RWPE1 (cell line): ENCODE measurements at regions of chr1 and their contacts with region 1.

Region 1: GRCh38 chr1:204363335-204364124 is 3.8 kb upstream of the PLEKHA6 start:
- DNase-seq: peak; percentile 81
- H3K27ac ChIP-seq: peak overlapping the region; percentile 48
- CTCF ChIP-seq: peak; percentile 93

Region 2: GRCh38 chr1:204190212-204191211 is 173.0 kb before region 1 on chr1:
- CTCF ChIA-PET with region 1: interaction called, 19 read pairs
- POLR2A ChIA-PET with region 1: no interaction called
- DNase-seq: peak; percentile 55
- H3K27ac ChIP-seq: no peak overlapping the region
- CTCF ChIP-seq: no peak

Region 3: GRCh38 chr1:204207136-204207616 is 156.4 kb before region 1 on chr1:
- CTCF ChIA-PET with region 1: interaction called, 52 read pairs
- POLR2A ChIA-PET with region 1: no interaction called
- DNase-seq: peak; percentile 91
- H3K27ac ChIP-seq: no peak overlapping the region
- CTCF ChIP-seq: peak; percentile 95

Region 4: DNA sequence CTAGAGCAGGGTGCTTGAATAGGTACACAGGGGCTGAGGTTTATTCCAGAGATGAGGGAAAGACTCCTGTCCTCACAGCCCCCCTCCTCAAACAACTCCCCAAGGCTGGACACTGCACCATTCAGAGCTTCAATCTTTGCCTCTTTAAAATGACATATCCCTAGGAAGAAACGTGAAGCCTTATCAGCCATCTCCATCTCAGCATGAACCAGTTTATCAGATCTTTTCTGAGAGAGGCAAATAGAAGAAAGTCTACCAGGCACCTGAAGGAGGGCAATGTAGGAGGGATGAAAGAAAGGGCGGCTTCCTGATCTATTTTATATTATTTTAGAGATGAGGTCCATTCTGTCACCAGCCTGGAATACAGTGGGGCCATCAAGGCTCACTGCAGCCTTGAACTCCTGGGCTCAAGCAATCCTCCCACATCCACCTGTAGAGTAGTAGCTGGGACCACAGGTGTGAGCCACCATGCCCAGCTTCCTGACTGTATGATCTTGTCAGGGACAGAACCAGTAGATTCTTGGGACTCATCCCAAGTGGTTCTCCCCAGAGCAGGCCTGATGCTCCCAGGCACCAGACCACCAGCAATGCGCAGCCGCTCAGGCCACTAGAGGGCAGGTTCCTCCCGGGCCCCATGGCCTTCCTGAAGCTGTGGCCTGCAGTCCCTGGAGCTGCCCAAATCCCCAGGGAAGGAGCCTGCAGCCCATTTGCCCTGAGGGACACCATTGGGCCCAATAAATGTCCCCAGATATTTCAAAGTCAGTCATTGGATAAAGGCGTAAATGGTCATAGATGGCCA is 105.4 kb before region 1 on chr1:
- CTCF ChIA-PET with region 1: interaction called, 45 read pairs
- POLR2A ChIA-PET with region 1: interaction called, 6 read pairs
- DNase-seq: peak; percentile 82
- H3K27ac ChIP-seq: no peak overlapping the region
- CTCF ChIP-seq: peak; percentile 51

Region 5: DNA sequence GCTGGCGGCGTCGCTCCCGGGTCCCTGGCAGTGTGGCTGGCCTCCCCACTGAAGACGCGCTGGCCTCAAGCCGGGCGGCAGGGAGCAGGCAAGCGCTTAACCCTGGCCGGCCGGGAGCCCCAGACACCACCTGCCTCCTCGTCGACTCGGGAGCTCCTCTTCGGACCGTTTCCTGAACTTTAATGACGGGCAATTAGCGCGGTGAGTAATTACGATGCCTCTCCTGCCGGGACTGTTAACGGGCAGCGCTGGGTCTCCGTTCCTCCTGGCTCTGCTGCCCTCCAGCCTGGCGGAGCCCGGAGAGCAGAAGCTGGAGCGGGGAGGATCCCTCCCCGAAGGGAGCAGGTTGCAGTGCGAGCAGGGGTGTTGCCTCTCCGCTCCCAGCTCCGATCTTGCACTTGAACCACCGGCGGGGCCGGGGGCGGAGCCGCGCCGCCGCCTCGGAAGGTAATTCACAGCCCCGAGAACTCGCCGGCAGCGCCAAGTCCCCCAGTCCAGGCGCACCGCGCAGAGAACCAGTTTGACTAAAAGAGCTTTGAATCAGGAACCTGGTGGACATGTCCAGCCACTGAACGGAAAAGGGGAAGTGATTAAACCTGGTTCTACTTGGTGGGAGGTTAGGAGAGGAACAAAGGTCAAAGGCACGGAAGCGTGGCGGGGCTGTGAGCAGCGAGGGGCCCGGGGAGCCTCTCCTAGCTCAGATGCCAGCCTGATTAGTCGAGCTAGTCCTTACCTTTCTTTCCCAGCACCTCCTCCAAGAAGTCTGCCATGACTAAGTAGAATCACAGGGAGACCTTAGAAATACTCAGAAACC is 14.5 kb after region 1 on chr1:
- CTCF ChIA-PET with region 1: interaction called, 16 read pairs
- POLR2A ChIA-PET with region 1: no interaction called
- DNase-seq: peak; percentile 56
- H3K27ac ChIP-seq: no peak overlapping the region
- CTCF ChIP-seq: no peak

Region 6: GRCh38 chr1:204578867-204579664 is 215.5 kb after region 1 on chr1:
- CTCF ChIA-PET with region 1: no interaction called
- POLR2A ChIA-PET with region 1: no interaction called
- DNase-seq: no peak
- H3K27ac ChIP-seq: no peak overlapping the region
- CTCF ChIP-seq: no peak